Sigmoid colon (tissue), 7 donors: ENCODE measurements at regions of chr16 and their contacts with region 1.

Region 1: GRCh38 chr16:72093448-72094265 is at the starts of genes DHX38 and TXNL4B:
- DNase-seq: peak; percentile 97
- H3K4me3 ChIP-seq: peak within 1 kb of the TSS; percentile 73 to 94 (median 83)
- H3K27ac ChIP-seq: peak within 1 kb of the TSS; percentile 91 to 95 (median 92)
- H3K4me1 ChIP-seq: peaks cover 0 to 40% (median 34%) of the 10 kb centered on the region in 4 donors
- H3K27me3 ChIP-seq: no peaks in the 10 kb centered on the region
- CTCF ChIP-seq: no peak
- EP300 ChIP-seq: no peak
- POLR2A ChIP-seq: peak; percentile 74 to 80
- total RNA-seq, gene DHX38: 24.8 to 54.0 (median 36.7) TPM
- total RNA-seq, gene TXNL4B: 7.8 to 11.8 (median 8.1) TPM

Region 2: DNA sequence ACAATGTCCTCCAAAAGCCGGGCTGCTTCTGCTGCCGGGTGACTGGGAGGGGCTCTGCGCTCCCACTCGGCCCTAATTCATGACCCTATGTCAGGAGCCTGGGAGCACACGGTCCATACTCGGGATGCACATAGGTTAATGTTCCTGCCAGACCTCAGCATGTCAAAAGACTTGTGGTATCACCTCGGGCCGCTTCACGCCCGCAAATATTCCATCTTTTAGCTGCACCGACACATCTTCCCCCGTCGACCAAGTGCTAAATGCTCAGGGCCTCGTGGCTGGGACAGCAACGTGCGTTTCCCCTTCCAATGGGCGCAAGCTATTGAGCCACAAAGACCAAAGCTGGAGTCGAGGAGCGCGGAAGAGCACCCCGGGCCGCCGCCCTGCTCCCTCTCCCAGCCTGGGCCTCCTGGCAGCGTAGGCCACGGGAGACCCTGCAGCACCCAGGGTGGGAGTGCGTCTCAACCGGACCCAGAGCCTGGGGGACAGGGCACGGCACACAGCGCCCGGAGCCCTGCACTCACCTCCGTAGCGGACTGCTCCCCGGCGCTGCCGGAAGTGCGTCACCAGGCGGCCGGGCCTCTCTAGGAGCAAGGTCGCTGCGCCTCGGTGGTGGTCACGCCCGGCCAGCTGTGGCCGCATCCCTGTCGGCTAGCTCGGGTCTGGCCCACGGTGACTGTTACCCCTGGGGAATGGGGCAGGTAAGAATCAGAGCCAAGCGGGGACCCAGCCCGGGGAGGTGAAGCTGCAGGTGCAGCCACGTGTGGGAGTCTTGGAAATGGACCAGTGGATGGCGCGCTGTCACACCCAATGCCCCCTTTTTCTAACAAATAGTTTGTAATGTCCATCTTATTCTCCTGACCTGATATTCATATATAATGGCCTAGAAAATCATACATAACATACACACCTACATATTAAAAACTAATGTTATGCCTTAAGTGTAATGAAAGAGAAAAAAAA is 631.7 kb before region 1 on chr16 and contains the start of gene ZNF23:
- intact Hi-C with region 1: loop called (anchors 5 kb)
- DNase-seq: peak; percentile 94
- H3K4me3 ChIP-seq: peak within 1 kb of the TSS; percentile 76 to 92 (median 78)
- H3K27ac ChIP-seq: peak within 1 kb of the TSS; percentile 86 to 95 (median 92)
- H3K4me1 ChIP-seq: peaks cover 0 to 28% (median 22%) of the 10 kb centered on the region in 4 donors
- H3K27me3 ChIP-seq: no peaks in the 10 kb centered on the region
- CTCF ChIP-seq: no peak
- EP300 ChIP-seq: peak in 1 of 4 donors; percentile 54
- POLR2A ChIP-seq: peak; percentile 62 to 90
- total RNA-seq, gene ZNF23: 3.9 to 11.6 (median 7.5) TPM

Region 3: DNA sequence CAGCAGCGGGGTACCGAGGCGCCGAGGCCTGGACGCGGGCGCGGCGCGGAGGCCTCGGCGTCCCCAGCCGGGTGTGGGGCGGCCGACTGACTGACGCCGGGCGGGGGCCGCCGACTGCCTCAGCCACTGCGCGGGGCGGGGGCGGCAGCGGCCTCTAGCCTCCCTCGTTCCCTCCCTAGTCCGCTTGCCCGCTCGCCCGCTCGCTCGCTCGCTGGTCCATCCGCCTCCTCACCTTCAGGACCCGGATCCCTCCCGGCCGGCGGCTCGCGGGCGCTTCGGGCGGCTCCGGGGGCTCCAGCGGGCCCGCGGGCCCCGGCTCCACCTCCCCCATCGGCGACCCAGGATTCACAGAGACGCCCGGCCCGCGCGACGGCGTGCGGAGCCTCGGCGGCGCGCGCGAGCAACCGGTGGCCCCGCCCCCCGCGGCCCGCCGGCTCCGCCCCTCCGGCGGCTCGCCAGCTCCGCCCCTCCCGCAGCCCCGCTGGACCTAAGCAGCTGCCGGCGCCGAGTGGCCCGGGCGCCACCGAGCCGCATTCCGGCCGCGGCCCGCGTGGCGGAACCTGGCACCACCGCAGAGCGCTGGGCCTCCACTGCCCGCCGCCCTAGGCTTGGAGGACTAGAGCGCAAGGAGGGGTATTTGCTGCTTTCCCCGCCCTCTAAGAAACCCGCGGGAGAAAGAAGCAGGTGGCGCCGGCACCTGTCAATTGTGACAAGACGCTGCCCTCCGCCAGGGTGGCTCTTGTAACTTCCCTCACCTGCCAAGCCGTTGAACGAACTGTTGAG is 369.9 kb before region 1 on chr16:
- intact Hi-C with region 1: loop called (anchors 10 kb)
- DNase-seq: peak; percentile 87
- H3K4me3 ChIP-seq: peak overlapping the region; percentile 58 to 96 (median 78)
- H3K27ac ChIP-seq: peak overlapping the region; percentile 81 to 99 (median 96)
- H3K4me1 ChIP-seq: peaks cover 0 to 34% (median 23%) of the 10 kb centered on the region in 4 donors
- H3K27me3 ChIP-seq: no peaks in the 10 kb centered on the region
- CTCF ChIP-seq: no peak
- EP300 ChIP-seq: no peak
- POLR2A ChIP-seq: no peak

Region 4: DNA sequence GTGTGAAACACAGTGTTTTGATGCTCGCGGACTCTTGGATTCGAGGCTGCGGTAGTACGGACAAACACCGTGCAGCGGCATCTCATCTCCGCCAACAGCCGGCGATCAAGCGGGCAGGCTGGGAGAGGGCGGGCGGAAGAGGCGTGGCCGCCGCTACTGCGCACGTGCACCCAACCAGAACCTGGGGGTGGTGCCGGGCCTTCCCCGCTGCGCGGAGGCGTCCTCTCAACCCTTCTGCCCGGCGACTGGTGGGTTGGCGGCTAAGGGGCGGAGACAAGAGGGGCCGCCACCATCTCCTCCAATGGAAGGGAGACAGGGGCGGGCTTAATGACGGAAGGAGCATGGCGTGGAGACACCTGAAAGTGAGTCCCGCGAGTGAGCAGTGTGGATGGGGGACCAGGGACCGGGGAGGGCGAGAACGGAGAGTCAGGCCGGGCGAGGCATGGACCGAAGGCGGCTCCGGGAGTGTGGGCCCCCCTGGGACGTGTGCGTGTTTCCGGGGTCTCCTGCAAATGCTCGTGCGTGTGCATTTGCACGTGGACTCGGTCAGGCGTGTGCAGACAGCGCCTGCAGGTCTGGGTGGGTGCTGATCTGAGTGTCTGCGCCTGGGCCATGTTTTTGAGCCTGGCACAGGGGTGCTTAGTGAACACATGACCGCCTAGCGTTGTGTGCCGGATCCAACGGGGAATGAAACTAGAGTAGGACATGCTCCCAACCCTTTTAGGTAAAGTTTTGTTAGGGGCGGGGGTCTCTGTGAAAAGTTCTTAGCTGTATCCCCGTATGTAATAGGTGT is 85.0 kb before region 1 on chr16 and contains the start of gene DHODH:
- intact Hi-C with region 1: loop called (anchors 1 kb)
- DNase-seq: peak; percentile 99
- H3K4me3 ChIP-seq: peak within 1 kb of the TSS; percentile 57 to 83 (median 70)
- H3K27ac ChIP-seq: peak within 1 kb of the TSS; percentile 52 to 74 (median 64)
- H3K4me1 ChIP-seq: peaks cover 0 to 4% (median 2%) of the 10 kb centered on the region in 4 donors
- H3K27me3 ChIP-seq: no peaks in the 10 kb centered on the region
- CTCF ChIP-seq: no peak
- EP300 ChIP-seq: peak in 1 of 4 donors; percentile 30
- POLR2A ChIP-seq: no peak
- total RNA-seq, gene DHODH: 3.2 to 7.4 (median 4.0) TPM

Region 5: DNA sequence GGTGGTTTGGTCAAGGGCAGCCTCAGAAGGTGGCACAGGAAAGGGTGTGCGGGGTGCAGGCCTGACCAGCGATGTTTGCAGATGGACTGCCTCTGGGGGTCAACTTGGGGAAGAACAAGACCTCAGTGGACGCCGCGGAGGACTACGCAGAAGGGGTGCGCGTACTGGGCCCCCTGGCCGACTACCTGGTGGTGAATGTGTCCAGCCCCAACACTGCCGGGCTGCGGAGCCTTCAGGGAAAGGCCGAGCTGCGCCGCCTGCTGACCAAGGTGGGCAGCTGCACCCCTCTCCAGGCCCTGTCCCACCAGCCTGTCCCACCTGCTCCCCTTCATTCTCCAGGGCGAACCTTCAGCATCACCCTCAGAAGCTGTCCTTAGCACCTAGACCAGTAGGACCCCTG is 72.6 kb before region 1 on chr16:
- intact Hi-C with region 1: no loop called
- DNase-seq: no peak
- H3K4me3 ChIP-seq: no peak overlapping the region
- H3K27ac ChIP-seq: no peak overlapping the region
- H3K4me1 ChIP-seq: no peaks in the 10 kb centered on the region
- H3K27me3 ChIP-seq: no peaks in the 10 kb centered on the region
- CTCF ChIP-seq: no peak
- EP300 ChIP-seq: no peak
- POLR2A ChIP-seq: no peak